ENCODE measurements at regions of chr14 and their contacts with region 1.

Region 1: GRCh38 chr14:75011356-75011994 is 8.8 kb downstream of the EIF2B2 start:
- DNase-seq: no peak
- H3K4me3 ChIP-seq: no peak overlapping the region
- H3K27ac ChIP-seq: no peak overlapping the region
- H3K4me1 ChIP-seq: no peaks in the 10 kb centered on the region
- H3K27me3 ChIP-seq: no peaks in the 10 kb centered on the region
- CTCF ChIP-seq: no peak
- EP300 ChIP-seq: no peak
- POLR2A ChIP-seq: no peak
- RAD21 ChIP-seq: no peak

Region 2: GRCh38 chr14:74988131-74988530 is 23.3 kb before region 1 on chr14:
- CTCF ChIA-PET with region 1: no interaction called
- POLR2A ChIA-PET with region 1: no interaction called
- DNase-seq: no peak
- H3K4me3 ChIP-seq: no peak overlapping the region
- H3K27ac ChIP-seq: no peak overlapping the region
- H3K4me1 ChIP-seq: peaks cover 2 to 8% (median 5%) of the 10 kb centered on the region in 4 experiments; a peak in 5 of 7 replicates
- H3K27me3 ChIP-seq: no peaks in the 10 kb centered on the region
- CTCF ChIP-seq: no peak
- EP300 ChIP-seq: no peak
- POLR2A ChIP-seq: no peak
- RAD21 ChIP-seq: no peak

Region 3: GRCh38 chr14:75022655-75023054 is 11.2 kb after region 1 on chr14:
- CTCF ChIA-PET with region 1: interaction called, 9 read pairs
- POLR2A ChIA-PET with region 1: interaction called, 19 read pairs
- DNase-seq: no peak
- H3K4me3 ChIP-seq: no peak overlapping the region
- H3K27ac ChIP-seq: no peak overlapping the region
- H3K4me1 ChIP-seq: no peaks in the 10 kb centered on the region
- H3K27me3 ChIP-seq: no peaks in the 10 kb centered on the region
- CTCF ChIP-seq: peak; percentile 61 to 66 (median 64)
- EP300 ChIP-seq: no peak
- POLR2A ChIP-seq: no peak
- RAD21 ChIP-seq: peak; percentile 63 to 72

Region 4: GRCh38 chr14:75119056-75119455 is 107.6 kb after region 1 on chr14:
- CTCF ChIA-PET with region 1: no interaction called
- POLR2A ChIA-PET with region 1: no interaction called
- DNase-seq: no peak
- H3K4me3 ChIP-seq: no peak overlapping the region
- H3K27ac ChIP-seq: no peak overlapping the region
- H3K4me1 ChIP-seq: no peaks in the 10 kb centered on the region
- H3K27me3 ChIP-seq: no peaks in the 10 kb centered on the region
- CTCF ChIP-seq: no peak
- EP300 ChIP-seq: no peak
- POLR2A ChIP-seq: no peak
- RAD21 ChIP-seq: no peak

Measured in H1 (cell line).